GM13976 (cell line): ENCODE measurements at regions of chr14 and their contacts with region 1.

Region 1: DNA sequence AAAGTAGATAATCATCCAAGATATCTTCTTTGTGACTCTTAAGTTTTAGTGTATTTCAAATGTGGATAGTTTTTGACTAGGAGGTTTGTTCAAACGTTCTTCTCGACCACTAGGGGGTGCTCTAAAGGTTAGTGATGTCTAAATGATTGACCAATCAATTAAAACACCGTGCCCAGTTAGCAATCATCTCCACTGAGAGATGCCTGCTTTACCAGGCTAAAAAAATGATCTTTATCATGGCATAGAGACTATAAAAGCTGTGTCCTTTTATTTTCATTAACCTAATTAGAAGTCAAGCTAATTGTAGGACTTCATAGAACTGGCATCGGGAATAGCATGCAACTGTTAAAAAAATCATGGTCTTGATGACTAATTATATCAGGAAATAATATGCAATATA is 153.9 kb downstream of the PRKCH start:
- DNase-seq: peak; percentile 53
- CTCF ChIP-seq: no peak

Region 2: DNA sequence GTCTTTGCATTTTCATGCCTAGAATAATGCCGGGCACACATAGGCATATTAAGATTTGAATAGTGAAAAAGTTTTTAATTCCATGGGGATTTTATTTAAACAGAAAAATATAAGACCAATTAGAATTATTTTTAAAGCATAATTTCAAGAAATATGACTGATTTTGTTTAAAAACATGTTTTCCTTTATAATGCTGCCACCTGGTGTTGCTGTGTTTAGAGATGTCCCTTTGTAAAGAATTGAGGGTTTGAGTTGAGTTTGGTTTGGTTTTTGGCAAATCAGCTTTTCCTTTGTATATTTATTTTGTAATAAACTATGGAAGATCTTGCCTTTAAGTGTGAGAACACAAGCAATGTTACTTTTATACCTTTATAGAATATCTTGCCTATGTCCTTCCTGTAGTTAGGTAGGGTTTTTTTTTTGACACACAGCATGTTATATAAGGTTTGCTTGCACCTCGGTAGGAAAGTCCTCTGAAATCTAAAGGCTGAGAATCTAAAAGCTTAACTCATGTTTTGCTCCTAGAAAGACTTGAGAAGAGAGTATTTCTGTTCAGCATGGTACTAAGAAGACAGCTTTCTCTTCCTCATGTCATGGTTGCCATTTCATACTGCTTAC is 255.5 kb after region 1 on chr14:
- in situ Hi-C with region 1: loop called (anchors 10 kb)
- DNase-seq: no peak
- CTCF ChIP-seq: no peak